ENCODE measurements at regions of chr1 and their contacts with region 1.

Region 1: GRCh38 chr1:156096640-156097391 is 14.6 kb upstream of the MEX3A start:
- DNase-seq: no peak
- H3K4me3 ChIP-seq: peak overlapping the region; percentile 3; the same call in 1 of the 2 replicates
- CTCF ChIP-seq: peak; percentile 99

Region 2: GRCh38 chr1:156001682-156002171 is 95.1 kb before region 1 on chr1:
- CTCF ChIA-PET with region 1: no interaction called
- POLR2A ChIA-PET with region 1: no interaction called
- DNase-seq: no peak
- H3K4me3 ChIP-seq: no peak overlapping the region
- CTCF ChIP-seq: no peak

Region 3: DNA sequence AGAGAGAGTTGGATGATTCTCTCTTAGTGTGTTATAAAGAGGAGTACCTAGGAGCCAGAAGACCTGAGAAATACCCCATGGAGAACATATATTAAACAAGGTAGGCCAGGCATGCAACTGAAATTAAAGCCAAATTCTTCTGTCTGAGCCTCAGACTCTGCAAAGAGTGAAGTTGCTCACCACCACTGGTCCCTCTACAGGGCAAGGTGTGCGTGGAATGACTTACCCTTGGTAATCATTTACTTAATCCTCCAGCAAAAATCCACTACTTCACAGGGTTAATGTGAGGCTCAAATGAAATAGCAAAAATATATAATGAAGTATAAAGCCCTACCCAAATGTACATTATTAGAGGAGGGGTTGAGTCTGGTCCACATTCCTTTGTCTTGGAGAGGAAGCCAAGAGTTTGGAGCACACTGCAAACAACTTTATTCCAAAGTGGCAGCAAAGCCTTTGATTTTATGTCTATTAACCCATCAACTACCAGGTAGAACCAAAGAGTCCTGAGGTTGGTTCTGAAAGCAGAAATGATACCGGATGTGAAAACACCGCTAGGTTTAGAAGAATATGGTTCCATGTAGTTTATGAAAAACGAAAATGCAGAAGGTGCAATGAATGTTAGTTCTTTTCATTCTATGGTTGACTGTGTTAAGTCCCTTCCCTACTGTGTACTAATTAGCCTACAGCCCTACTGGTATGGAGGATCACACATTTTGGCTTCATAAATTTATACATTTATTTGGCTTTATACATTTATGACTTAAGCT is 84.6 kb before region 1 on chr1:
- CTCF ChIA-PET with region 1: no interaction called
- POLR2A ChIA-PET with region 1: no interaction called
- DNase-seq: no peak
- H3K4me3 ChIP-seq: no peak overlapping the region
- CTCF ChIP-seq: no peak

Region 4: GRCh38 chr1:156076501-156077429 is 20.1 kb before region 1 on chr1:
- CTCF ChIA-PET with region 1: interaction called, 63 read pairs
- POLR2A ChIA-PET with region 1: interaction called, 3 read pairs
- DNase-seq: no peak
- H3K4me3 ChIP-seq: no peak overlapping the region
- CTCF ChIP-seq: no peak

Region 5: GRCh38 chr1:156114101-156114916 is 17.5 kb after region 1 on chr1 and contains the start of gene LMNA:
- CTCF ChIA-PET with region 1: interaction called, 1,837 read pairs
- POLR2A ChIA-PET with region 1: interaction called, 60 read pairs
- DNase-seq: peak; percentile 78
- H3K4me3 ChIP-seq: peak within 1 kb of the TSS; percentile 100
- CTCF ChIP-seq: no peak

Region 6: DNA sequence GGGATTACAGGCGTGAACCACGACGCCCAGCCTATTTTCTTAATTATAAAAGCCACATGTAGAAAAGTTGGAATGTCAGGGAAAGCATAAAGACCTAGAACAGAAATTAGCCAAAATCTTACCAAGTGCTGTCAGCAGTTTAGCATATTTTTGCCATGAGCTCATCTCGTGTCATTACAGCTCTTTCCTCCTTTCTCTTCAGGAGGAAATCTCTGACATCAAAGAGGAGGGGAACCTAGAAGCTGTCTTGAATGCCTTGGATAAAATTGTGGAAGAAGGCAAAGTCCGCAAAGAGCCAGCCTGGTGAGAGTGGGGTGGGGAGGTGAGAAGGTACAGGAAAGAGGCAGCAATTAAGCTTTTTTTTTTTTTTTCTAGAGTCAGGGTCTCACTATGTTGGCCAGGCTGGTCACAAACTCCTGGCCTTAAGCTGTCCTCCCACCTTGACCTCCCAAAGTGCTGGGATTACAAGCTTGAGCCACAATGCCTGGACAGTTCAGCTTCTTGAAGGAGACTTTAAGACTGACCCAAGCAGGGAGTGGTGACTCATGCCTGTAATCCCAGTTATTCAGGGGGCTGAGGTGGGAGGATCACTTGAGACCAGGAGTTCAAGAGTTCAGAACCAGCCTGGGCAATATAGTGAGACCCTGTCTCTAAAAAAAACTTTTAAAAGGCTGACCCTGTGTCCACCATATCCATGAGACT is 136.8 kb after region 1 on chr1:
- CTCF ChIA-PET with region 1: interaction called, 340 read pairs
- POLR2A ChIA-PET with region 1: interaction called, 3 read pairs
- DNase-seq: peak; percentile 63
- H3K4me3 ChIP-seq: no peak overlapping the region
- CTCF ChIP-seq: no peak

Region 7: DNA sequence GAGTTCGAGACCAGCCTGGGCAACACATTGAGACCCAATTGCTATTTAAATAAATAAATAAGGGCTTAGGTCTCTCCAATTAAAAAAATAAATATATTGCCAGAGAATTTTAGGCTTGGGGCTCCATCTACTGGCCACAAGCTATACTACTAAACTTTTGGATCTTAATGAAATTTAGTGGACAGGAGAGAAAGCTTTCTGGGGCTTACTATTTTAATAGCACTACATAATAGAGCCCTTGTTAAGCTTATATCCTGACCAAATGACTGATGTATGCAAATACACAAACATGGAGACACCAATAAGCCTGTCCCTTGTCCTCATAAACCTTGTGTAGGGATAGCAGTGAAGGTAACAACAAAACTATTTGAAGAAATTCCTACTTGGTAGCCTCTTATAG is 222.8 kb after region 1 on chr1:
- CTCF ChIA-PET with region 1: interaction called, 17 read pairs
- POLR2A ChIA-PET with region 1: interaction called, 3 read pairs
- DNase-seq: no peak
- H3K4me3 ChIP-seq: no peak overlapping the region
- CTCF ChIP-seq: peak; percentile 23

Region 8: DNA sequence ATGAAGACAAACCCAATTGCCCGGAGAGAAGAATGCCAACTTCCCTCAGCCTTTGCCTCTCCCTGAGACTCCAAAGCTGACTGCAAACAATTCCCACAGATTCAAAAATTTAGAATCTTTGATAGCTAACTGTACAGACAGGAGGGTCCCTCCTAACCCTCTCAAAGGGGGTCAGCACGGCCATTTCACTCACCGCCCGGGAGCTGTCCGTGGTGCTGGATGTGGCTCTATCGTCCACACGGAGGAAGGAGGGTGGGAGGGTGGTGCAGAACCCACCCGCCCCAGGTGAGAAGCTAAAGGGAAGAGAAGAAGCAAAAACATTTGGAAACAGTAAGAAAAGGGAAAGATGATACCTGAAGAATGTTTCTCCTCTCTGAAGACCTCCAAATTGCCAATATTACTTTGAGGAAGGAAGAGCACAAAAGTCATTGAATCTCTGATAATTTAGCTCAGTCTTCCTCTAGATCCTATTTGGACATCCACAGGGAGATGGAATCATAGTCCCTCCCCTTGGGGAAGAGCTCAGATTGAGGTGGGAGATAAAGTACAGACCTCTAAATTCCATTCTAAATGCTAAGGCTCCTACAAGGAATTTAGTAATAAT is 317.7 kb after region 1 on chr1:
- CTCF ChIA-PET with region 1: no interaction called
- POLR2A ChIA-PET with region 1: no interaction called
- DNase-seq: no peak
- H3K4me3 ChIP-seq: no peak overlapping the region
- CTCF ChIP-seq: no peak